Naive thymus-derived CD4-positive, alpha-beta T cell (primary cell): ENCODE measurements at regions of chr9 and their contacts with region 1.

Region 1: DNA sequence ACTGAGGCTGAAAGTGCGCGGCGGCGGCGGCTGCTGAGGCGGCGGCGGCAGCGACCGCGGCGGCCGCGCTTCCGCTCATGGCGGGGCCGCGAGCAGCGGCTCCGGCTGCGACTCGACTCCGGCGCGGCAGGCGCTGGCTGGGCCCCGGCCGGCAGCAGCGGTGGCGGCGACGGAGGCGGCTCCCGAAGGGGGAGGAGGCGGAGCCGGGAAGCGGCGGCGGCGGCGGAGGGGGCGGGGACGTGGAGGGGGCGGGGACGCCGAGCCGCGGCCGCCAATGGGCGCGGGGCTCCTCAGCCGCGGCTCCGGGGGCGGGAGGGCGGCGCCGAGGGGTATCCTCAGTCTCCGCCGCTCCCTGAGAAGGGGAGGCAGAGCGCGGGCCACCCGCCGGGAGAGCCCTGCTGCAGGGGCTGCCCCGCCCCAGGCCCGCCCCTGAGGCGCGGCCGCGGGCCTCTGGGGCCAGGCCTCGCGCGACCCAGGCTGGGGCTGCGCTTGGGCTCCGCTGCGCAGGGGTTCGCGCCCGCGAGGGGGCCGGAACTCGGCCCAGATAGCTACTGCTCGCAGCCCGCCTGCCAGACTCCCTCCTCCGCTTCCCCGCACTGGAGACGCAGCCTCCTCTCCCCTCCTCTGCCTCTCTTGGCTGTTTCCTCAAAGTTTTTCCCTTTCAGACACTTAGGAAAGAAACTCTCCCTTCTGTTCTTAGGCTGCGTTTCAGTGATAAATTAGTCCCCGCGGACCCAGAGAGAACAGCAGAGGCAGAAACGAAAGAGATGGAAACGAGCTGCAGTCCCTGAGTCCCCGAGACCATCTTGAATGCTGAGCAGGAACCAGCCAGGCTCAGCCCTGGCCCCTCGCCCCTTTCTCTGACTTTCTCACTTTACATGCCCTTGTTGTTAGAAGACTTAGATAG is 85.0 kb upstream of the MELK start:
- DNase-seq: peak; percentile 84 to 93 (median 89)
- ATAC-seq: peak; percentile 94
- H3K4me3 ChIP-seq: peak overlapping the region; percentile 77
- H3K4me3 Mint-ChIP-seq: peak overlapping the region; percentile 87 to 99 (median 96)
- H3K27ac ChIP-seq: peak overlapping the region; percentile 96
- H3K27ac Mint-ChIP-seq: peak overlapping the region; percentile 95 to 100 (median 98)
- H3K4me1 ChIP-seq: peaks cover 30 to 39% of the 10 kb centered on the region in 2 donors
- H3K4me1 Mint-ChIP-seq: peaks cover 33 to 77% (median 64%) of the 10 kb centered on the region in 7 donors
- H3K27me3 ChIP-seq: no peaks in the 10 kb centered on the region
- H3K27me3 Mint-ChIP-seq: no peaks in the 10 kb centered on the region

Region 2: GRCh38 chr9:36258208-36258988 is 229.3 kb before region 1 on chr9 and contains the start of gene GNE:
- CTCF ChIA-PET with region 1: no interaction called
- POLR2A ChIA-PET with region 1: no interaction called
- intact Hi-C with region 1: loop called in 1 of 2 experiments (anchors 5 kb)
- DNase-seq: peak; percentile 92 to 99 (median 96)
- ATAC-seq: peak; percentile 96
- H3K4me3 ChIP-seq: peak within 1 kb of the TSS; percentile 98
- H3K4me3 Mint-ChIP-seq: peak within 1 kb of the TSS; percentile 96 to 100 (median 98)
- H3K27ac ChIP-seq: peak within 1 kb of the TSS; percentile 93
- H3K27ac Mint-ChIP-seq: peak within 1 kb of the TSS; percentile 92 to 98 (median 96)
- H3K4me1 ChIP-seq: peaks cover 7 to 9% of the 10 kb centered on the region in 2 donors
- H3K4me1 Mint-ChIP-seq: peaks cover 0 to 14% (median 12%) of the 10 kb centered on the region in 7 donors
- H3K27me3 ChIP-seq: no peaks in the 10 kb centered on the region
- H3K27me3 Mint-ChIP-seq: peaks cover 0 to 2% (median 0%) of the 10 kb centered on the region in 5 donors
- total RNA-seq, gene GNE: 12.6 to 18.5 (median 16.0) TPM

Region 3: DNA sequence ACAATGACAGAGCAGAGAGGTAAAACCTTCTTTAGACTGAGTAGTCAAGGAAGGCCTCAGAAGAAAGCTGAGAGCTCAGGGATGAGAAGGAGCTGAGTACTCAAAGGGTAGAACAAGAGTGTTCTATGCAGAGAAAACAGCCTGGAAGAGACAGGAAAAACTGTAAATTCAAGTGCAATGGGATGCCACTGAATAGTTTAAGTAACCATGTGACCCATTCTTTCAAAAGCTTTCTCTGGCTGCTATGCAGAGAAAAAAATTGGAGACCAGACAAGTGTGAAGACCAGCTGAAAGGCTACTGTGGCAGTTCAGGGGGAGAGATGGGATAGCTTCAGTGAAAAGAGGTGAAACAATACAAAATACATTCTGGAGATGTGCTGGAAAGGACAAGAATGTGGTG is 26.4 kb before region 1 on chr9:
- CTCF ChIA-PET with region 1: interaction called, 4 read pairs
- POLR2A ChIA-PET with region 1: interaction called, 62 read pairs
- intact Hi-C with region 1: loop called (anchors 1 kb)
- DNase-seq: no peak
- ATAC-seq: peak; percentile 12
- H3K4me3 ChIP-seq: no peak overlapping the region
- H3K4me3 Mint-ChIP-seq: no peak overlapping the region
- H3K27ac ChIP-seq: no peak overlapping the region
- H3K27ac Mint-ChIP-seq: peak overlapping the region; percentile 29 to 71 (median 57)
- H3K4me1 ChIP-seq: peaks cover 18 to 23% of the 10 kb centered on the region in 2 donors
- H3K4me1 Mint-ChIP-seq: peaks cover 36 to 76% (median 68%) of the 10 kb centered on the region in 7 donors
- H3K27me3 ChIP-seq: no peaks in the 10 kb centered on the region
- H3K27me3 Mint-ChIP-seq: no peaks in the 10 kb centered on the region

Region 4: DNA sequence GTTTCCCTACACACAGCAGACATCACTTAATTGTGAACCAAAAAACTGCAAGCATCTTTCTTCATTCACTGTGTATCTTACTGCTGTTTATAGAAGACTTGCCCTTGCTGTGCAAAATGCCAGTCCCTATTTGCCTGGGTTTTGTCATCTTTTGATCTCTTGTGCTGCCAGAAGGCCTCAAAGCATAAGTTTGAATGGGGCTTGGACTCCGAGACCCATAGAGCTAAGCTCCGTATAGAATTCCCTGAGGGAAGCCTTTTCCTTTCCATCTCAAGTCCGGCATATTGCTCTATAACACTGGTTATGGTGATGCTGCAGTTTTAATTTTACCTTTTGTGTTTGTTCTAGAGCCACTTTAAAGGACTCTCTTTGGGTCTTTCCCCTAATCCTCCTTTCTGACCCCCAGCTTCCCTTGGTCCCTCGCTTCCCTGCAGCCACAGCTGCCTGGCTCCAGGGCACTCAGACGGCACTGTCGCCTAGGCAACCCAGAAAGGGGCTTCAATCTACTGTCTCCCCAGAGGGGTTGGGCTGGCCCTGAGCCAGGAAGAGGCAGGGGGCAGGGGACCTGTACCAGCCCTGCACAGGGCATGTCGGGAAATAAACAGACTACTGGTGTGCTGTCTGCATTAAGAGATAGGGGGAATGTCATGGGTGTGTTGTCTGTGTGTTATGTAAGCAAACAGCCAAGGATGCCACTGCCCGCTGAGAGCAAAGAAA is 11.6 kb after region 1 on chr9:
- CTCF ChIA-PET with region 1: interaction called, 4 read pairs
- POLR2A ChIA-PET with region 1: interaction called, 29 read pairs
- intact Hi-C with region 1: loop called in 1 of 2 experiments (anchors 1 kb)
- DNase-seq: no peak
- ATAC-seq: no peak
- H3K4me3 ChIP-seq: no peak overlapping the region
- H3K4me3 Mint-ChIP-seq: no peak overlapping the region
- H3K27ac ChIP-seq: no peak overlapping the region
- H3K27ac Mint-ChIP-seq: peak overlapping the region in 2 of 9 donors; percentile 49 to 74
- H3K4me1 ChIP-seq: peaks cover under 1 to 15% of the 10 kb centered on the region in 2 donors
- H3K4me1 Mint-ChIP-seq: peaks cover 18 to 61% (median 42%) of the 10 kb centered on the region in 7 donors
- H3K27me3 ChIP-seq: no peaks in the 10 kb centered on the region
- H3K27me3 Mint-ChIP-seq: no peaks in the 10 kb centered on the region

Region 5: GRCh38 chr9:36572515-36573418 is 85.0 kb after region 1 on chr9 and contains the start of gene MELK:
- CTCF ChIA-PET with region 1: no interaction called
- POLR2A ChIA-PET with region 1: no interaction called
- intact Hi-C with region 1: loop called in 1 of 2 experiments (anchors 1 kb)
- DNase-seq: peak; percentile 69 to 94 (median 82)
- ATAC-seq: peak; percentile 97
- H3K4me3 ChIP-seq: peak within 1 kb of the TSS; percentile 83
- H3K4me3 Mint-ChIP-seq: peak within 1 kb of the TSS; percentile 88 to 95 (median 90)
- H3K27ac ChIP-seq: peak within 1 kb of the TSS; percentile 76
- H3K27ac Mint-ChIP-seq: peak within 1 kb of the TSS; percentile 62 to 90 (median 83)
- H3K4me1 ChIP-seq: peaks cover 0 to 5% of the 10 kb centered on the region in 2 donors
- H3K4me1 Mint-ChIP-seq: peaks cover 7 to 38% (median 13%) of the 10 kb centered on the region in 7 donors
- H3K27me3 ChIP-seq: no peaks in the 10 kb centered on the region
- H3K27me3 Mint-ChIP-seq: peaks cover 0 to 5% (median 0%) of the 10 kb centered on the region in 5 donors
- total RNA-seq, gene MELK: 0.22 to 40.2 (median 0.88) TPM in 3 of 5 experiments, not detected in the others

Region 6: GRCh38 chr9:36866840-36867239 is 379.1 kb after region 1 on chr9:
- CTCF ChIA-PET with region 1: no interaction called
- POLR2A ChIA-PET with region 1: no interaction called
- intact Hi-C with region 1: no loop called
- DNase-seq: no peak
- ATAC-seq: no peak
- H3K4me3 ChIP-seq: no peak overlapping the region
- H3K4me3 Mint-ChIP-seq: no peak overlapping the region
- H3K27ac ChIP-seq: no peak overlapping the region
- H3K27ac Mint-ChIP-seq: no peak overlapping the region
- H3K4me1 ChIP-seq: no peaks in the 10 kb centered on the region
- H3K4me1 Mint-ChIP-seq: no peaks in the 10 kb centered on the region
- H3K27me3 ChIP-seq: no peaks in the 10 kb centered on the region
- H3K27me3 Mint-ChIP-seq: peaks cover 0 to 9% (median 7%) of the 10 kb centered on the region in 5 donors

Region 7: GRCh38 chr9:37119907-37120842 is 632.4 kb after region 1 on chr9 and contains the start of gene ZCCHC7:
- CTCF ChIA-PET with region 1: no interaction called
- POLR2A ChIA-PET with region 1: no interaction called
- intact Hi-C with region 1: loop called in 1 of 2 experiments (anchors 2 kb)
- DNase-seq: peak; percentile 95 to 99 (median 98)
- ATAC-seq: peak; percentile 97
- H3K4me3 ChIP-seq: peak within 1 kb of the TSS; percentile 93
- H3K4me3 Mint-ChIP-seq: peak within 1 kb of the TSS; percentile 88 to 99 (median 96)
- H3K27ac ChIP-seq: peak within 1 kb of the TSS; percentile 100
- H3K27ac Mint-ChIP-seq: peak within 1 kb of the TSS; percentile 93 to 100 (median 97)
- H3K4me1 ChIP-seq: peaks cover 11 to 25% of the 10 kb centered on the region in 2 donors
- H3K4me1 Mint-ChIP-seq: peaks cover 16 to 42% (median 32%) of the 10 kb centered on the region in 7 donors
- H3K27me3 ChIP-seq: no peaks in the 10 kb centered on the region
- H3K27me3 Mint-ChIP-seq: no peaks in the 10 kb centered on the region
- total RNA-seq, gene ZCCHC7: 26.1 to 47.1 (median 40.9) TPM